ENCODE measurements at regions of chr6 and their contacts with region 1.

Region 1: DNA sequence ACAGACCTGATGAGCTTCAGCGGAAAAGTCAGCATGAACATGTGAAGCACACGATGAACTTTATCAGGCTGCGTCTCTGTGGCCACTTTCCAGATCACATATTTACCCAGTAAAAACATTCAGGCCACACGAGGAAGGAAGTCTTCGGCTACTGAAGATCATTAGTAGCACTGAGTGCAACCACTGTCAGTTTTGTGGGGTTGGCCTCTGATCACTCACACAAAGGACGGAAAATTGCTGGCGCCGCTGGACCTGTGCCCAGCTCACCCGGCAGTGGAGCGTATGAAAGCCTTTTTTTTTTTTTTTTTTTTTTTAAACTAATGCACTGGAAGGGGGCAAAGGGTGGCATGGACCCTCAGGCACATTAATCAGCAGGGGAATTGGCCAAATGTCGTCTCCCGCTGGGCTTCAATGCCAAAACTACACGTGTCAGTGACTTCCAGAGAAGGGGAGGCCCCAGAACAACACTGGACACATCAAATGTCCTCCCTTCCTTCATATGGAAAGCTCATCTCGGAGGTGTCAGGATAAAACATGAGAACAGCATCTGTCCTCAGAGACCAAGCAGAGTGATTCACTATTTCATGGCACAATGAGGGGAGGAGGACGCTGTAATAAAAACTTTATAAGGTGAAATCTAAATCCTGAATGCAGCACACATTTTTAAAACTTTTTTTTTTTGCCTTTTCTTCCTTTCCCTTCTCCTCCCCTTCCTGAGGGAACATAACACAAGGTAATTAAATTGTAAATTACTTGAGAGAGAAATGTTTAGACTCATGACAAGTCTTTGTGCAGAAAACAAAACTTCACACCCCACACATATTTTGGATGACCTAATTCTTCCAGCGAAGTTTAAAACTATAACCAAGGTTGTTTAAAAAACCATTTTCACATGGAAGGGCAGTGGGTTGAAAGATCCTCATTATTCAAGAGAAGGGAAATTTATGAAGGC is 223.4 kb downstream of the FOXC1 start:
- DNase-seq: peak; percentile 72
- ATAC-seq: peak; percentile 95
- H3K4me3 ChIP-seq: no peak overlapping the region
- H3K27ac ChIP-seq: 0 out of 2 replicates have a peak overlapping the region, but pooled peaks have one; percentile 1
- H3K4me1 ChIP-seq: peaks cover 20% of the 10 kb centered on the region
- H3K27me3 ChIP-seq: no peaks in the 10 kb centered on the region
- CTCF ChIP-seq: no peak

Region 2: DNA sequence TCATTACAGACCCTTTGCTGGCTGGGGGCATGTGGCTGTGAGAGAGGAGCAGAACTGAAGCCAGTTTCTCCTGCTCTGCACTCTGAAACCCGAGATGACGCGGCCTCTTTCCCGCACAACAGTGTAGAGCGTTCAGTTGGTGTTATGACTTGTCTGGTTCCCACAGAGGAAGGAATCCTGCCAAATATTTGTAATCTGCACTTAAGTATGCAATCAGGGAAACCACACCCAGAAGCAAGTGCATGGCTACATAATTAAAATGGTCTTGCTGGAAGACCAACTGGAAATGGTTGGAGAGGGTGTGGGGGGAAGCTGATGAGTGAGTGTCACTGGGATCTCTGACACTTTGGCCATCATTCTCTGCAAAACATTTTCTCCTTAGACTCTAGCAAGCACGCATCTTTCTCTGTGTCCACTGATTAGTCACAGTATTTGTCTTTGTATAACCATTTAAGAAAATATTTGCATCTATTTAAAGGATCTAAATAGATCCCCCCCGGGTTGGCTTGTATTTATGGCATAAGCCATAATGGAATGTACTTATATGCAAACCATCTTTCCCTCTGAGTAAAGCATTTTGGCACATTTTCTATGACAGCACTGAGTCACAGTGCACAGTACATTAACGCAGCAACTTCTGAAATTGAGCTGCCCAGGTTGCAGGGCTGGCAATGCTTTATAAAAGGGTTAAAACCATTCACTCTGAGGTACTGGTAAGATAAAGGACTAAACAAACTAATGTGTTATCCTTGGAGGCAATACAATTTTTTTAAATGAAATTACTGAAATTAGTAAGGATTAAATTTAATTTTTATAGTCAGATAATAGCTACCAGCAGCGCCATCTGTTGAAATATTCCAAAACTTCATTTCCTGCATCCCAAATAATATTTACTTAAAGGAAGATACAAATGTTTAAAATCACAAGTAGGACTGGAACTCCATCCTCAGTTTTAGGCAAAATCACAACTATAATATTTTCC is 146.7 kb before region 1 on chr6:
- CTCF ChIA-PET with region 1: no interaction called
- POLR2A ChIA-PET with region 1: no interaction called
- intact Hi-C with region 1: loop called (anchors 10 kb)
- DNase-seq: peak; percentile 94
- ATAC-seq: peak; percentile 78
- H3K4me3 ChIP-seq: peak overlapping the region; percentile 34; the same call in 1 of the 2 replicates
- H3K27ac ChIP-seq: peak overlapping the region; percentile 92
- H3K4me1 ChIP-seq: peaks cover 55% of the 10 kb centered on the region
- H3K27me3 ChIP-seq: no peaks in the 10 kb centered on the region
- CTCF ChIP-seq: peak; percentile 74

Region 3: DNA sequence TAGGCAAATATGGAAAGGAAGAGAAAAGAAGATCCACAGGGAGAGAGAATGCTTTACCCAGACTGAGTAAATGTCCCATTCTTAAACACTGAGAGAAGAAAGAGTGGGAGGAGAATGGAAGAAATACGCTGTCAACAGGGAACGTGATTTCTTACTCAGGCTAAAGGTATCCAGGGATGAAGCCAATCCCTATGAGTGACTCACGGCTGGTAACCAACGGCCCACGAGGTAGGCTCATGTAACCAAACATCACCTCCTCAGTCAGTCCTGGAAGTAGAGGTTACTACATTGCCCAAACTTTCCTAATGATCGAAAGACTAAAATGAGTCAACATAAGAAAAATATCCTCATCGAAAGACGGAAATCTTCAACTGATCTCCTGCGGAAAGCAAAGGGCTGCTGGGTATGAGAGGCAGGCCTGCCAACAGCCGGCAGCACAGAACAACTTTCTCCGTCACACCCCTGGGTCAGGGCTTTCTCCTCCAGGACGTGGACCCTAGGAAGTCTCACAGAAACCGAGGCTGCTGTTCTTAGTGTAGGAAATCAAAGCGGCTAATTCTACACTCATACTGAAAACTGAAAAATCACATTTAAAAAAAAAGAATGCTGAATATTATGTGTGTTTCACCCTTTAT is 119.7 kb after region 1 on chr6:
- CTCF ChIA-PET with region 1: no interaction called
- POLR2A ChIA-PET with region 1: no interaction called
- intact Hi-C with region 1: loop called (anchors 5 kb)
- DNase-seq: peak; percentile 97
- ATAC-seq: peak; percentile 100
- H3K4me3 ChIP-seq: peak overlapping the region; percentile 47; the same call in 1 of the 2 replicates
- H3K27ac ChIP-seq: peak overlapping the region; percentile 80
- H3K4me1 ChIP-seq: peaks cover 16% of the 10 kb centered on the region
- H3K27me3 ChIP-seq: no peaks in the 10 kb centered on the region
- CTCF ChIP-seq: peak; percentile 32; the same call in 1 of the 2 replicates

Measured in PC-3 (cell line).